PC-9 (cell line): ENCODE measurements at regions of chr7 and their contacts with region 1.

Region 1: DNA sequence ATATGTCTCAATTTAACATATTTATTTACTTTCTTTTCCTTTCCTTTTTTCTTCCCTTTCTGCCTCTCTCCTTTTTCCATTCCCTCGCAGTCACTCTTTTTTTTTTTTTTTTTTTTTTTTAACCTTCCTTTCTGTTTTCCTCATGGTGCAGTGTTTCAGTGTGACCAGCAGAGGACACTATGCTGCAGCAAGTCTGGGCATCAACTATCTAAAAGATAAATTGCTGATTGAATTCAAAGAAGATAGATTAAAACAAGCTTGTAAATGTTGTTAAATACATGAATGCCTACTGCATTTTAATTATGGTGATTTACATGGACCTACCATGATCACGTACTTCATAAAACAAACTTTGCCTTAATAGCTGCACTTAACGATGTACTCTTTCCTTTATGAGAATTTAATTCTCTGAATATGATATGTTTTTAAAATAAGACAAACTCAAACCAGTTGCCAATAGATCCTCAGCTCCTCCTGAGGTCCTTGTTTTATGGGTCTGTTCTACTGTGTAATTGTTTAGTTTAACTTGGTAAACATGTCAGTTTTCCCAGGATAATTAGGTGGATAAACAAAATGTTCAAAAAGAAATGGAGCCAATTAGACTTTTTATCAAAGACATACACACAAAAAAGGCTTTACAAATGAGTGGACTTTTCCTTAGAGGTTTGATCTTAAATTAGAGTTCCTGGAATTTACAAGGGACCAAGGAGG is 101.0 kb upstream of the AGR3 start:
- DNase-seq: peak; percentile 31 to 66
- H3K4me3 ChIP-seq: no peak overlapping the region
- H3K27ac ChIP-seq: peak overlapping the region; percentile 5; the same call in 1 of the 2 replicates
- H3K4me1 ChIP-seq: peaks cover 61% of the 10 kb centered on the region
- H3K27me3 ChIP-seq: no peaks in the 10 kb centered on the region
- CTCF ChIP-seq: peak; percentile 99

Region 2: GRCh38 chr7:16847366-16847864 is 135.4 kb before region 1 on chr7:
- CTCF ChIA-PET with region 1: no interaction called
- POLR2A ChIA-PET with region 1: interaction called, 7 read pairs
- intact Hi-C with region 1: loop called (anchors 5 kb)
- DNase-seq: peak; percentile 90 to 100
- H3K4me3 ChIP-seq: peak overlapping the region; percentile 39; the same call in 1 of the 2 replicates
- H3K27ac ChIP-seq: peak overlapping the region; percentile 87
- H3K4me1 ChIP-seq: peaks cover 59% of the 10 kb centered on the region
- H3K27me3 ChIP-seq: no peaks in the 10 kb centered on the region
- CTCF ChIP-seq: no peak

Region 3: DNA sequence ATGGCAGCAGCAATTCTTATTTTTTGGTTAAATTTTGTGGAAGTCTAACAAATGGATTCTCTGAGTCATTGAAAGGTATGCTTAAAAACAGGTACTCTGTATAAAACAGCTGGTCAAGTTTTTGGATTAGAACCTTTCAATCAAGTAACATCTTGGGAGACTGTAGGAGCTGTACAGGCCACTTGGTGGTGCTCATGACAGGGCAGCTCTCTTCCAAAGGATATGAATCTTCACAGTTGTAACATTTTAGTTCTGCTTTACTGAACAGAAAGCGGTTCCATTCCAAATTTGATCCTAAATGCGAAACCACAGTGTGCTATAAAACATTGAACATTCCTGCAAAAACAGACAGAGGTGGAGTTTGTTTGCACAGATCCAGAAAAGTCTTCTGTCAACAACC is 56.5 kb before region 1 on chr7:
- CTCF ChIA-PET with region 1: interaction called, 10 read pairs
- POLR2A ChIA-PET with region 1: interaction called, 3 read pairs
- intact Hi-C with region 1: no loop called
- DNase-seq: no peak
- H3K4me3 ChIP-seq: no peak overlapping the region
- H3K27ac ChIP-seq: no peak overlapping the region
- H3K4me1 ChIP-seq: peaks cover 57% of the 10 kb centered on the region
- H3K27me3 ChIP-seq: no peaks in the 10 kb centered on the region
- CTCF ChIP-seq: peak; percentile 35; the same call in 1 of the 2 replicates

Region 4: GRCh38 chr7:16951483-16952080 is 31.2 kb before region 1 on chr7:
- CTCF ChIA-PET with region 1: no interaction called
- POLR2A ChIA-PET with region 1: no interaction called
- intact Hi-C with region 1: no loop called
- DNase-seq: no peak
- H3K4me3 ChIP-seq: no peak overlapping the region
- H3K27ac ChIP-seq: no peak overlapping the region
- H3K4me1 ChIP-seq: no peaks in the 10 kb centered on the region
- H3K27me3 ChIP-seq: no peaks in the 10 kb centered on the region
- CTCF ChIP-seq: no peak

Region 5: GRCh38 chr7:17298207-17298839 is 315.5 kb after region 1 on chr7 and contains the start of gene AHR:
- CTCF ChIA-PET with region 1: interaction called, 12 read pairs
- POLR2A ChIA-PET with region 1: interaction called, 4 read pairs
- intact Hi-C with region 1: loop called (anchors 2 kb)
- DNase-seq: peak; percentile 85 to 87
- H3K4me3 ChIP-seq: peak within 1 kb of the TSS; percentile 83
- H3K27ac ChIP-seq: peak within 1 kb of the TSS; percentile 68
- H3K4me1 ChIP-seq: peaks cover 36% of the 10 kb centered on the region
- H3K27me3 ChIP-seq: no peaks in the 10 kb centered on the region
- CTCF ChIP-seq: no peak
- total RNA-seq, gene AHR: 46.4 and 61.3 TPM in 2 replicates

Region 6: GRCh38 chr7:17599733-17600685 is 617.2 kb after region 1 on chr7:
- CTCF ChIA-PET with region 1: no interaction called
- POLR2A ChIA-PET with region 1: no interaction called
- intact Hi-C with region 1: loop called (anchors 5 kb)
- DNase-seq: peak; percentile 58 to 99
- H3K4me3 ChIP-seq: no peak overlapping the region
- H3K27ac ChIP-seq: peak overlapping the region; percentile 82
- H3K4me1 ChIP-seq: peaks cover 39% of the 10 kb centered on the region
- H3K27me3 ChIP-seq: no peaks in the 10 kb centered on the region
- CTCF ChIP-seq: no peak